ENCODE measurements at regions of chr4 and their contacts with region 1.

Region 1: GRCh38 chr4:48779998-48780742 is at the start of gene FRYL:
- DNase-seq: peak; percentile 97
- ATAC-seq: peak; percentile 92
- H3K4me3 ChIP-seq: peak within 1 kb of the TSS; percentile 79
- H3K27ac ChIP-seq: peak within 1 kb of the TSS; percentile 75
- H3K4me1 ChIP-seq: peaks cover 19% of the 10 kb centered on the region; the same call in 1 of the 2 replicates
- H3K27me3 ChIP-seq: no peaks in the 10 kb centered on the region
- CTCF ChIP-seq: no peak
- total RNA-seq, gene FRYL: 29.9 and 31.3 TPM in 2 replicates

Region 2: GRCh38 chr4:48578132-48578968 is 201.8 kb before region 1 on chr4:
- CTCF ChIA-PET with region 1: no interaction called
- POLR2A ChIA-PET with region 1: no interaction called
- intact Hi-C with region 1: loop called (anchors 2 kb)
- DNase-seq: peak; percentile 67
- ATAC-seq: peak; percentile 73
- H3K4me3 ChIP-seq: no peak overlapping the region
- H3K27ac ChIP-seq: no peak overlapping the region
- H3K4me1 ChIP-seq: no peaks in the 10 kb centered on the region
- H3K27me3 ChIP-seq: no peaks in the 10 kb centered on the region
- CTCF ChIP-seq: peak; percentile 80

Region 3: DNA sequence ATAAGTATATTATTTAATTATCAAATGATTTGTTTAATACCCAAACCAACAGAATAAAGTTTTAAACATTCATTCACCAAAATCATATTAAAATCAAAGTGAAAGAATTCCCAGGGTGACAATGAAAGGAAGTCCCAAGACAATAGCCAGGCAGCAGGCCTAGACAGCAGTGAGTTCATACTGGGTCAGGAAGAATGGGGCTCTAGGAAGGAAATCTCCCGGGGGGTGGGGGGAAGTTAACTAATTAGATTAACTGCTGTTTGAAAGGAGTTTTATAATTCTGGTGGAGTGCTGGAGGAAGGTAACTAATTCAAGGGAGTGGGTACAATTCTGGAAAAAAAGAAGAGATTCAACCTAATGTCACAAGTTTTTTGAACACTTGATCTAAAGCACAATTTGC is 186.0 kb before region 1 on chr4:
- CTCF ChIA-PET with region 1: no interaction called
- POLR2A ChIA-PET with region 1: no interaction called
- intact Hi-C with region 1: no loop called
- DNase-seq: no peak
- ATAC-seq: no peak
- H3K4me3 ChIP-seq: no peak overlapping the region
- H3K27ac ChIP-seq: no peak overlapping the region
- H3K4me1 ChIP-seq: no peaks in the 10 kb centered on the region
- H3K27me3 ChIP-seq: no peaks in the 10 kb centered on the region
- CTCF ChIP-seq: no peak

Region 4: GRCh38 chr4:48681856-48682255 is 98.3 kb before region 1 on chr4:
- CTCF ChIA-PET with region 1: no interaction called
- POLR2A ChIA-PET with region 1: no interaction called
- intact Hi-C with region 1: loop called (anchors 5 kb)
- DNase-seq: peak; percentile 33
- ATAC-seq: peak; percentile 61; the same call in 1 of the 2 replicates
- H3K4me3 ChIP-seq: no peak overlapping the region
- H3K27ac ChIP-seq: no peak overlapping the region
- H3K4me1 ChIP-seq: 0 out of 2 replicates have a peak, but pooled peaks cover 6% of the 10 kb centered on the region
- H3K27me3 ChIP-seq: no peaks in the 10 kb centered on the region
- CTCF ChIP-seq: peak; percentile 64

Region 5: GRCh38 chr4:48830706-48831531 is 50.7 kb after region 1 on chr4 and contains the start of gene OCIAD1:
- CTCF ChIA-PET with region 1: no interaction called
- POLR2A ChIA-PET with region 1: no interaction called
- intact Hi-C with region 1: loop called (anchors 1 kb)
- DNase-seq: peak; percentile 97
- ATAC-seq: peak; percentile 99
- H3K4me3 ChIP-seq: peak within 1 kb of the TSS; percentile 85
- H3K27ac ChIP-seq: peak within 1 kb of the TSS; percentile 83
- H3K4me1 ChIP-seq: peaks cover 6% of the 10 kb centered on the region
- H3K27me3 ChIP-seq: no peaks in the 10 kb centered on the region
- CTCF ChIP-seq: no peak
- total RNA-seq, gene OCIAD1: 52.6 and 61.0 TPM in 2 replicates

Region 6: GRCh38 chr4:48906206-48907173 is 126.3 kb after region 1 on chr4 and contains the start of gene OCIAD2:
- CTCF ChIA-PET with region 1: no interaction called
- POLR2A ChIA-PET with region 1: no interaction called
- intact Hi-C with region 1: loop called (anchors 5 kb)
- DNase-seq: peak; percentile 66
- ATAC-seq: peak; percentile 54
- H3K4me3 ChIP-seq: peak within 1 kb of the TSS; percentile 94
- H3K27ac ChIP-seq: peak within 1 kb of the TSS; percentile 25
- H3K4me1 ChIP-seq: peaks cover 42% of the 10 kb centered on the region
- H3K27me3 ChIP-seq: no peaks in the 10 kb centered on the region
- CTCF ChIP-seq: peak; percentile 45
- total RNA-seq, gene OCIAD2: 169 and 255 TPM in 2 replicates